K562 (cell line): ENCODE measurements at regions of chr3 and their contacts with region 1.

Region 1: DNA sequence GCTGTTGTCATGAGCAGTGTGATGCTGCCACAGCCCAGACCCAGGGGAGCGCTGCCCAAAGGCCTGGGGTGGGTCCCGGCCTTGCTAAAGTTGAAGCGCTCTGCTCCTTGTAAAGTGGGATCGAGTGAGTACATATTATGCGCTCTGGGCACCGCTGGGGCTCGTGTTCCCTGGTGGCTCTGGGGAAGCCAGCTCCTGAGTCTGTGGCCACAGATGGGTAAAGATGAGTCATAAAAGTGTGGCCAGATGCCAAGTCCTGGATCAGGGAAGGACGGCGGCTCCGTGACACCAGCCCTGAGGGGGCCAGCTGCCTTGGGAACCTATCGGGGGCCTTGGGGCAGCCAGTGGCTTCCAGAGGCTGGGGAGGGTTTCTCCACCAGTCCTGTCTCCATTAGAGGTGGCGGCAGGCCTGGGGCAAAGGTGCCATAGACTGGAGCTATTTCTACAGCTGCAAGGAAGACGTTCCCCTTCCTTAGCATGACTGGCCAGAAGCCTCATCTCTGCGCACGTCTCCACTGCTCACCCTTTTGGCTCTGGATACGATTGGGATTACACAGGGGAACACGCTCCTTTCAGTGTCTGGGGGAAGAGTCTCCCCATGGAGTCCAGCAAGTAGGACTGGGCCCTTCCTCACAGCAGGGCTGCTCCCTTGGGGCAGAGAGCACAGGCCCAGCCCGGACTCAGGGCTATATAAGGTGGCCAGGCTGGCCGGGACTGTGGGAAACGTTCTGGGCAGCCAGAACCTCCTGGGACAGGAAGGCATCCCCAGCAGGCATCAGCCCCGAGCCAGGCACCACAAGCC is 1.2 kb upstream of the ITIH4 start:
- DNase-seq: peak; percentile 27 to 67 (median 56)
- ATAC-seq: peak; percentile 39
- H3K4me3 ChIP-seq: no peak overlapping the region
- H3K27ac ChIP-seq: no peak overlapping the region
- H3K4me1 ChIP-seq: peaks cover 15 to 20% of the 10 kb centered on the region in 2 experiments
- H3K27me3 ChIP-seq: peaks cover 0 to 28% of the 10 kb centered on the region in 2 experiments; a peak in 4 of 5 replicates
- CTCF ChIP-seq: no peak
- EP300 ChIP-seq: no peak
- POLR2A ChIP-seq: no peak
- RAD21 ChIP-seq: no peak

Region 2: DNA sequence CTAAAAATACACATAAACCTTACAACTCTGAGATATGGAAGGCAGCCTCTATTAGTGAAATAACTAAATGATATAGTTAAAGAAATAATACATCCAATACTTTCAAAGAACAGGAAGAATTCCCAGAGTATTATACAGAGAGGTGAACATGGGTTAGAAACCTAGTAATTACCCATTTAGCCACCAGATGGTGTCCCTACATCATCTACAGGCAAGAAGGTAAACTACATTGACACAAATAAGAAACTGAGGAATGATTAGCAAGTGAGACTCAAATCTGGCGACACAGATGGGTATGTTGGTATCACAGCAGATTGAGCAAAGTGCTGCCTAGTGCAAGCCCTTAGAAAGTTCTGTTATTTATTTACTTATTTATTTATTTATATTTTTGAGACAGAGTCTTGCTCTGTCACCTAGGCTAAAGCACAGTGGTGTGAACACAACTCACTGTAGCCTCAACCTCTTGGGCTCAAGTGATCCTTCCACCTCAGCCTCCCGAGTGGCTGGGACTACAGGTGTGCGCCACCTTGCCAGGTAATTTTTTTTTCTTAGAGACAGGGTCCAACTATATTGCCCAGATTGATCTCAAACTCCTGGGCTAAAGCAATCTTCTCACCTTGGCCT is 89.2 kb before region 1 on chr3:
- CTCF ChIA-PET with region 1: no interaction called
- POLR2A ChIA-PET with region 1: no interaction called
- in situ Hi-C with region 1: no loop called
- intact Hi-C with region 1: loop called (anchors 5 kb)
- DNase-seq: peak; percentile 16 to 33 (median 26)
- ATAC-seq: peak; percentile 66
- H3K4me3 ChIP-seq: no peak overlapping the region
- H3K27ac ChIP-seq: no peak overlapping the region
- H3K4me1 ChIP-seq: no peaks in the 10 kb centered on the region
- H3K27me3 ChIP-seq: no peaks in the 10 kb centered on the region
- CTCF ChIP-seq: peak; percentile 44 to 66 (median 46); a peak in 4 of 6 replicates
- EP300 ChIP-seq: no peak
- POLR2A ChIP-seq: no peak
- RAD21 ChIP-seq: peak; percentile 69